ENCODE measurements at regions of chr5 and their contacts with region 1.

Region 1: GRCh38 chr5:56270568-56271392 is 37.6 kb upstream of the ANKRD55 start:
- DNase-seq: peak; percentile 91

Region 2: DNA sequence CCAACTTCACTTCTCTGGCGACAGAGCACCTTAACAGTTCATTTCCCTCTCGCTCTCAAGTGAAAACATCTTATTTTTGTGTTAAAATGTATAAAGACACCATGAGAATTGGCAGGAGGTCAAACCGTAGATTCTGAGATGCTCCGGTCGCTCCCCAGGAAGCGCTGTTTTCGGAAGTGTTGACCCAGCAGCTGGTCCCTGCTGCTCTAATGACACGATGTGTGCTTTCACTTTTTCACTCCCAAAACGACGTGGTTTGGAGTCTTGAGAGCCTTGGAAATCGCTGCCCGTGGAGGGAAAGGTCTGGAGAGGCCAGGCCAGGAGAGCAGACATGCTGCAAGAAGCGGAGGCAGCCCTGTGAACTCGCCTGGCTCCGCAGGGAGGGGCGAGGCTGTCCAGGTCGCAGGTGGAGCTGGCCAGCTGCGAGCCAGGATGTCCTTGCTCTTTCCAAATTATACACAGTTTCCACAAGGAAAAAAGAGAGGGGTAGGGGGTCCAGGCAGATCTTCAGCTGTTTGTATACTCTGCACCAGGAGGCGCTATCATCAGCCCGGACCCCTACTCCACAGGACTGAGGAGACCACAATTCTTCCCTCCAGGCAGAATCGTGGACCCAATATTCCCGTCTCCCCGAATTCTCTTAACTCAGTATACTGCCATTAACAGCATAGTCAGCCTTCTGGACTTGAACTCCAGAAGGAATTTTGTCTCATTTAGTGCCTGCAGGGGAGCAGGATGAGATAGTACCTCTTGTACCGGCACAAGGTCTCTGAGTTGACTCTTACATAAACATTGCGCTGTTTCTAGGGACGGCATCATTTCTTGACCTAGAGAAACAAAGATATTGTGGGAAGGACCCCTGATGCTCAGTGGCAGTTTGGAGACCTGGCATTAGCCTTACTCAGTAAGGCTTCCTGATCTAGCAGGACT is 210.9 kb after region 1 on chr5:
- intact Hi-C with region 1: loop called (anchors 10 kb)
- DNase-seq: peak; percentile 87

Region 3: GRCh38 chr5:56588636-56589480 is 318.1 kb after region 1 on chr5:
- intact Hi-C with region 1: loop called (anchors 10 kb)
- DNase-seq: peak; percentile 81

Region 4: GRCh38 chr5:56686337-56687195 is 415.8 kb after region 1 on chr5:
- intact Hi-C with region 1: loop called (anchors 10 kb)
- DNase-seq: no peak

Region 5: GRCh38 chr5:56802205-56802604 is 531.4 kb after region 1 on chr5:
- intact Hi-C with region 1: no loop called
- DNase-seq: no peak

Region 6: DNA sequence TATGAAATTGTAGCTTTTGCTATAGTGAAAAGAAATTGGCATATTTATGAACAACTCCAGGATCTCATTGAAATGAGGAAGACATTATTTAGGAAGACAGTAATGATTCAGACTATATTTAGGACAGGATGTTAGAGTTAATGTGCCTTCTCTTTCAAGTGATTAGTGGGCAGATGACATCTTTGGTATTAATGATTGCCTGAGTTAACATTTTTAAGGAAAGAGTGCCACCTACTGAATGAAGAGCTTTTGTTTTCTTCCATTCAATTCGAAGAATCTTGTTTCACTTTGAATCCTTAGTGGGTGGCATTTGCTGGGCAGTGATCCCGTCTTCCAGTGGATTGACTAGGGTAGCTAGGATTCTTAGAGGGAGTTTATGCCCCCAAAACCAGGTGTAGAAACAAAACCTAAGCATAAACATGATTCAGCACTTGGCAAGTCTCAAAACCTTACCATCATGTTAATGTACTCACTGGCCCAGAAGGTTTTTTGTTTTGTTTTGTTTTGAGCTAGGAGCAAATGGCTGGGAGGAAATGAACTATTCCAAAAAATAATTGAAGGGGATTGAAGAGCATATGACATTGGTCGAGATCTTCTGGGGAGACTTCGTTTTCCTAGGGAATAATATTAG is 567.7 kb after region 1 on chr5:
- intact Hi-C with region 1: loop called (anchors 2 kb)
- DNase-seq: no peak

Region 7: DNA sequence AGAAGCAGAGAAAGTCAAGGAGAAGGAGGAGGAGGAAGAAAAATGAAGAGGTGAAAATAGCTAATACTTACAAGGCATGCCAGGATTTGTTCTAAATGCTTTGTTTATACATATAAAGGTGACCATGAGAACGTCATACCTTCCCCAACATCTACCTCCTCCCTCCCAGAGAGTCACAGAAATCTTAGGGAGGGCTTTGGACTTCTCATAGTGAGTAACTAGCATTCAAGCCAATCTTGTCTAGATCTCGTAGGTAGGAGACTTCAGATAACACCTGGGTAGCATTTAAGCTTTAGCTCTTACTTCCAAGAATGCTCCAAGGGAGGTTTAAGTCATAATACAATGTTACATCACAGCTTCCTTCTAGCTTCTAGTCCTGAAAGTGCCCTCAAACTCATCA is 866.6 kb after region 1 on chr5:
- intact Hi-C with region 1: loop called (anchors 10 kb)
- DNase-seq: no peak

Region 8: DNA sequence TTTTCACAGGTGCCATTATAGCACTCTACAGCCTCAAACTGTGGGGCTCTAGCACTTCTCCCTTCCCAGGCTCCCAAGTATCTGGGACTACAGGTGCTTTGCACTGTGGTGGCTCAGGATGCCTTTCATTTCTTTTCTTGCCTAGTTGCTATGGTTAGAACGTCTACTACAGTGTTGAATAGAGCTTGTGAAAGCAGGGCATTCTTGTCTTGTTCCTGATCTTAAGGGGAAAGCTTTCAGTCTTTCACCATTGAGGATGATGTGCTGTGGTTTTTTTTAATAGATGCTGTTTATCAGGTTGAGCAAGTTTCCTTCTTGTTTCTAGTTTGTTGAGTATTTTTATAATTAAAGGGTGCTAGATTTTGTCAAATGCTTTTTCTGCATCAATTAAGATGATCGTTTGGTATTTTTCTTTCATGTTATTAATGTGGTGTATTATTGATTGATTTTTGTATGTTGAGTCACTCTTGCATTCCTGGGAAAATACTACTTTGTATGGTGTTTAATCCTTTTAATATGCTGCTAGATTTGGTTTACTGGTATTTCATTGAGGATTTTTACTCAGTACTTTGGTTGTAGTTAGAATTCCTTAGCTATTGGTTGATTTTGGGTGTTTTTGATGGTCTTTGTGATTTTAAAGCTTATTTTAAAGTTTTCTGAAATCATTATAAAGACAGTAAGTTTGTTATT is 938.7 kb after region 1 on chr5:
- intact Hi-C with region 1: loop called (anchors 10 kb)
- DNase-seq: no peak

Measured in cardiac septum (tissue), 1 donor.